ENCODE measurements at regions of chr1 and their contacts with region 1.

Region 1: GRCh38 chr1:150259758-150260669 is 2.4 kb downstream of the CA14 start:
- DNase-seq: peak; percentile 85 to 95
- H3K4me3 ChIP-seq: peak overlapping the region; percentile 44; the same call in 1 of the 2 replicates
- H3K27ac ChIP-seq: peak overlapping the region; percentile 71
- H3K4me1 ChIP-seq: peaks cover 68% of the 10 kb centered on the region
- H3K27me3 ChIP-seq: no peaks in the 10 kb centered on the region
- CTCF ChIP-seq: no peak

Region 2: GRCh38 chr1:150186789-150187559 is 73.0 kb before region 1 on chr1:
- CTCF ChIA-PET with region 1: no interaction called
- POLR2A ChIA-PET with region 1: interaction called, 11 read pairs
- intact Hi-C with region 1: no loop called
- DNase-seq: peak in 1 of 2 experiments; percentile 56
- H3K4me3 ChIP-seq: peak overlapping the region; percentile 37; the same call in 1 of the 2 replicates
- H3K27ac ChIP-seq: peak overlapping the region; percentile 77
- H3K4me1 ChIP-seq: peaks cover 13% of the 10 kb centered on the region; the same call in 1 of the 2 replicates
- H3K27me3 ChIP-seq: no peaks in the 10 kb centered on the region
- CTCF ChIP-seq: peak; percentile 87

Region 3: GRCh38 chr1:150321826-150322166 is 61.8 kb after region 1 on chr1:
- CTCF ChIA-PET with region 1: interaction called, 3 read pairs
- POLR2A ChIA-PET with region 1: interaction called, 3 read pairs
- intact Hi-C with region 1: loop called (anchors 5 kb)
- DNase-seq: no peak
- H3K4me3 ChIP-seq: peak overlapping the region; percentile 79
- H3K27ac ChIP-seq: peak overlapping the region; percentile 84
- H3K4me1 ChIP-seq: peaks cover 16% of the 10 kb centered on the region
- H3K27me3 ChIP-seq: no peaks in the 10 kb centered on the region
- CTCF ChIP-seq: no peak

Region 4: GRCh38 chr1:150376110-150376509 is 116.1 kb after region 1 on chr1:
- CTCF ChIA-PET with region 1: interaction called, 17 read pairs
- POLR2A ChIA-PET with region 1: no interaction called
- intact Hi-C with region 1: no loop called
- DNase-seq: no peak
- H3K4me3 ChIP-seq: no peak overlapping the region
- H3K27ac ChIP-seq: peak overlapping the region; percentile 40
- H3K4me1 ChIP-seq: 0 out of 2 replicates have a peak, but pooled peaks cover 3% of the 10 kb centered on the region
- H3K27me3 ChIP-seq: no peaks in the 10 kb centered on the region
- CTCF ChIP-seq: no peak

Region 5: GRCh38 chr1:151008190-151008860 is 748.3 kb after region 1 on chr1 and contains the start of gene PRUNE1:
- CTCF ChIA-PET with region 1: no interaction called
- POLR2A ChIA-PET with region 1: interaction called, 3 read pairs
- intact Hi-C with region 1: loop called (anchors 5 kb)
- DNase-seq: peak; percentile 95
- H3K4me3 ChIP-seq: peak within 1 kb of the TSS; percentile 89
- H3K27ac ChIP-seq: peak within 1 kb of the TSS; percentile 68
- H3K4me1 ChIP-seq: peaks cover 52% of the 10 kb centered on the region
- H3K27me3 ChIP-seq: no peaks in the 10 kb centered on the region
- CTCF ChIP-seq: no peak
- total RNA-seq, gene PRUNE1: 26.6 and 30.7 TPM in 2 replicates

Region 6: DNA sequence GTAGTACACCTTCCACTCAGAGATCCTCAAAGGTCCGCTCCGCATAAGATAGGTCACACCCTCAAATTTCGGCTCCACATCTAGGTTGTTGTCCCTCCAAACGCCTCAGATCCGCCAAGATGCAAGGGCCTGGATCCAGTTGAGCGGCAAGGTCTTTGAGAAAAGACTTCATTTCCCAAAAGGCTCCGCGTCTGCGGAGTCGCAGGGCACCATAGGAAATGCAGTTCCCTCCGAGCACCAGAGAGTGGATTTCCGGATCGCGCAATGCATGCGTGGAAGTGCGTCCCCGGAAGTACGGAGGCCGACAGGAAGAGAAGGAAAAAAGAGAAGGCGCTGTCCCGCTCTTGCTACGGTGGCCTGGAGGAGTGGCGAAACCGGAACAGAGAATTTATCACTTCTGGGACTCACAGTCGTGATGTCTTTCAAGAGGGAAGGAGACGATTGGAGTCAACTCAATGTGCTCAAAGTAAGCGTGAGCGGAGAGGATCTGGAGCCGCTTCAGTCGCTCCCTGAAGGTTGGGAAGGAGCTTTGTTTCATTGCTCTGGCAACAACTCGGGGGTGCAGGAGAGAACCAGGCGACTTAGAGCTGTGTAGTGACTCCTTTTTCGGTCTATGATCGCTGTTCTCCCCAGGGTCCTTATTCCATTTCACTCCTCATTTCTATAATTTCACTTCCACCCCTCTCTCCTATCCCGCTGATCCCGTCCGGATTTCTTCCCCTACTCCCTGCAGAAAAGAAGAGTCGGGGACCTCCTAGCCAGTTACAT is 905.9 kb after region 1 on chr1 and contains the starts of genes LYSMD1 and SCNM1:
- CTCF ChIA-PET with region 1: no interaction called
- POLR2A ChIA-PET with region 1: interaction called, 13 read pairs
- intact Hi-C with region 1: no loop called
- DNase-seq: peak; percentile 94 to 96
- H3K4me3 ChIP-seq: peak within 1 kb of the TSS; percentile 64
- H3K27ac ChIP-seq: peak within 1 kb of the TSS; percentile 66
- H3K4me1 ChIP-seq: peaks cover 15% of the 10 kb centered on the region; the same call in 1 of the 2 replicates
- H3K27me3 ChIP-seq: no peaks in the 10 kb centered on the region
- CTCF ChIP-seq: no peak
- total RNA-seq, gene LYSMD1: 7.6 and 12.8 TPM in 2 replicates
- total RNA-seq, gene SCNM1: 42.5 and 47.7 TPM in 2 replicates

Measured in PC-9 (cell line).